Esophagus squamous epithelium (tissue), 5 donors: ENCODE measurements at regions of chr12 and their contacts with region 1.

Region 1: DNA sequence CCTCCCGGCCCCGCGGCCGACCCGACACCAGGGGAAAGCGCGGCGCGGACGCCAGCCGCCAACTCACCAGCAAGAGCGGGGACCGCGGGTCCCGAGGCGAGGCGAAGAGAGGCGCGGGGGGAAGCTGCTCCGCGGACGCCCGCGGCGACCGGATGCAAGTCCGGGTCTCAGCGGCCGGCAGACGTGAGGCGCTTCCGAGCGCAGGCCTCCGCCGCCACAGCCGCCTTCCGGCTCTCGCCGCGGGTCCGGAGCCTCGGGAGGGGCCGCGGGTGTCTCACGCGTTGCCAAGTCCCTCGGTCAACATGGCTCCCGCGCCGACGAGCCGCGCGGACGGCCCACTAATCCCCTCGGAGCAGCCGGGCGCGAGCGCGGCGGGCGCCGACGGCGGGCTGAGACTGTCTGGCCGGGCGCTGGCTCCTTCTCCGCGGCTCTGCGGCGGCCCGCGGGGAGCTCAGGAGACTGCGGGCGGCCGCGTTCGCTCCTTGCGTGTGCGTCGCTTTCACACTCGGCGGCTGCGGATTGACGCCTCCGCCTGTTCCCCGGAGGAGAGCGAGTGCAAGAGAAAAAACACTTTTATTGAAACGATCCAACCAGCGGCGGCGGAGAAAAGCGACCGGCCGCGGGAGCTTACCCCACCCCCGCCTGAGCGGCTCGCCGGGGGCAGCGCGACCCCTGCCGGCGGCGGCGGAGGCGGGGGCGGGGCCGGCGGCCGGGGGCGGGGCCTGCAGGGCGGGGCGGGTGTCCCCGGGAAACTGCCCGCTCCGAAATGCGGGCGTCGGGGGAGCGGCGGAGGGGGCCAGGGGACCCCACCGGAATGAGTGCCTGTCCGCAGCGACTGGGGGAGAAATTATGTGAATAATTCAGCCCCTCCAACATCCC is at the start of gene CDK17:
- DNase-seq: peak; percentile 13
- H3K4me3 ChIP-seq: peak within 1 kb of the TSS; percentile 83 to 100 (median 92)
- H3K27ac ChIP-seq: peak within 1 kb of the TSS; percentile 96 to 100 (median 98)
- H3K4me1 ChIP-seq: peaks cover 0 to 52% (median 18%) of the 10 kb centered on the region in 3 donors
- H3K27me3 ChIP-seq: no peaks in the 10 kb centered on the region
- CTCF ChIP-seq: peak in 4 of 6 experiments; percentile 33 to 57 (median 44)
- POLR2A ChIP-seq: peak in 2 of 4 donors; percentile 81 to 84
- total RNA-seq, gene CDK17: 15.4 to 37.4 (median 19.9) TPM

Region 2: DNA sequence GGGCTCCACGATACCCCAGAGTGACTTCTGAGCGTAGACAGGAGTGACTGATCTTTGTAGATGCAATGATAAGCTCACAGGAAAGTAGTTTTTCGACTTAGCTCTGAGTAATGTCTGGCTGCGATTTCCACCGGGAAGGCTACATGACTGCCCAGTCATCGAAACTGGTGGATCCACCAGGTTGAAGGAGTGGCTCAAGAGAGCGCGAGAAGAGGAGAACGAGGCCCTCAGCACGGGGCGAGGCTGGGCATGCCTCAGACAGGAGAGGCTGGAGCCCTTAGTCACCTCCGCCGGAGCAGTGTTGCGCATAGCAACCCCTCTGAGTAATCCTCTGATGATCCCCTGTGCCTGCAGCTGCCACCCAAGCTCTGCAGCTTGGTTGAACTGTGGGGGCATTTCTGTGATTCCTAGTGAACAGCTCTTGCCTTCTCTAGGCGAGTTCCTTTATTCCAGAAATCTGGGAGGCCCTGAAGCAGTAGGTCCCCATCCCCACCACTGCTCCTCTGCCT is 180.4 kb before region 1 on chr12:
- intact Hi-C with region 1: loop called (anchors 5 kb)
- DNase-seq: peak; percentile 27
- H3K4me3 ChIP-seq: peak overlapping the region in 2 of 4 donors; percentile 15 to 35
- H3K27ac ChIP-seq: peak overlapping the region; percentile 82 to 92 (median 84)
- H3K4me1 ChIP-seq: peaks cover 27 to 97% (median 65%) of the 10 kb centered on the region in 3 donors
- H3K27me3 ChIP-seq: no peaks in the 10 kb centered on the region
- CTCF ChIP-seq: no peak
- POLR2A ChIP-seq: peak in 1 of 4 donors; percentile 26

Region 3: GRCh38 chr12:96516472-96517430 is 116.6 kb after region 1 on chr12:
- intact Hi-C with region 1: loop called (anchors 10 kb)
- DNase-seq: peak; percentile 15
- H3K4me3 ChIP-seq: no peak overlapping the region
- H3K27ac ChIP-seq: peak overlapping the region in 1 of 4 donors; percentile 22
- H3K4me1 ChIP-seq: peaks cover 3 to 4% (median 4%) of the 10 kb centered on the region in 3 donors
- H3K27me3 ChIP-seq: no peaks in the 10 kb centered on the region
- CTCF ChIP-seq: peak; percentile 54 to 81 (median 72)
- POLR2A ChIP-seq: no peak

Region 4: DNA sequence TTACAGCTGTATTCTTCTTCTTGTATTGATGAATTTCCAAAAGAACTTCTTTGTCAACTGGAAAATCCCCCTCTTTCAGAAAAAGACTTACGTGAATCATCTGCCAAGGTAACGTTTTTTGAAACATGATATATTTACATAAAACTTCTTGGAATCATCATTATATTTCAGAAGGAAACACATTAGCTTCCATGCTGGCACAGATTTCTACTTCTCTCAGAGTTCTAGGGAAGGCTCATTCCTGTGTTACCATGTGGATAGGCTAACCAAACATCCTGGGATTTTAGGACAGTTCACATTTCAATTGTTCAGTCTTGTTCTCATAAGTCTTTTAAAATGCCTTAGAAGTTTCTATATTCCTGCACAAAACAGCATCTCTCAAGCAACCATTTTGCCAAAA is 386.6 kb after region 1 on chr12:
- intact Hi-C with region 1: no loop called
- DNase-seq: no peak
- H3K4me3 ChIP-seq: no peak overlapping the region
- H3K27ac ChIP-seq: no peak overlapping the region
- H3K4me1 ChIP-seq: no peaks in the 10 kb centered on the region
- H3K27me3 ChIP-seq: no peaks in the 10 kb centered on the region
- CTCF ChIP-seq: no peak
- POLR2A ChIP-seq: no peak